ENCODE measurements at regions of chrX and their contacts with region 1.

Region 1: GRCh38 chrX:110156167-110156754 is 153.3 kb downstream of the TMEM164 start:
- DNase-seq: no peak
- H3K4me3 Mint-ChIP-seq: no peak overlapping the region
- H3K27ac Mint-ChIP-seq: no peak overlapping the region
- H3K4me1 Mint-ChIP-seq: peaks cover 20% of the 10 kb centered on the region
- H3K27me3 Mint-ChIP-seq: no peaks in the 10 kb centered on the region

Region 2: GRCh38 chrX:110407910-110408545 is 251.8 kb after region 1 on chrX:
- intact Hi-C with region 1: loop called (anchors 1 kb)
- DNase-seq: peak; percentile 6
- H3K4me3 Mint-ChIP-seq: no peak overlapping the region
- H3K27ac Mint-ChIP-seq: no peak overlapping the region
- H3K4me1 Mint-ChIP-seq: peaks cover 7% of the 10 kb centered on the region
- H3K27me3 Mint-ChIP-seq: peaks cover 2% of the 10 kb centered on the region

Region 3: GRCh38 chrX:110412971-110413721 is 256.9 kb after region 1 on chrX:
- intact Hi-C with region 1: loop called (anchors 1 kb)
- DNase-seq: peak; percentile 42
- H3K4me3 Mint-ChIP-seq: no peak overlapping the region
- H3K27ac Mint-ChIP-seq: no peak overlapping the region
- H3K4me1 Mint-ChIP-seq: peaks cover 14% of the 10 kb centered on the region
- H3K27me3 Mint-ChIP-seq: peaks cover 6% of the 10 kb centered on the region

Measured in activated T-helper 1 cell treated with anti-CD3 and anti-CD28 coated beads, Interleukin-12 subunit alpha, Interleukin-12 subunit beta, Interleukin-2, Interleukin-4 antibody, amounts not matched to agents 30 ng/mL and 10 ng/mL and 1 ng/mL, durations not matched to agents 14 hours and 24 hours and 36 hours (primary cell).